Left ventricle myocardium inferior (tissue), 1 donor: ENCODE measurements at regions of chr2 and their contacts with region 1.

Region 1: DNA sequence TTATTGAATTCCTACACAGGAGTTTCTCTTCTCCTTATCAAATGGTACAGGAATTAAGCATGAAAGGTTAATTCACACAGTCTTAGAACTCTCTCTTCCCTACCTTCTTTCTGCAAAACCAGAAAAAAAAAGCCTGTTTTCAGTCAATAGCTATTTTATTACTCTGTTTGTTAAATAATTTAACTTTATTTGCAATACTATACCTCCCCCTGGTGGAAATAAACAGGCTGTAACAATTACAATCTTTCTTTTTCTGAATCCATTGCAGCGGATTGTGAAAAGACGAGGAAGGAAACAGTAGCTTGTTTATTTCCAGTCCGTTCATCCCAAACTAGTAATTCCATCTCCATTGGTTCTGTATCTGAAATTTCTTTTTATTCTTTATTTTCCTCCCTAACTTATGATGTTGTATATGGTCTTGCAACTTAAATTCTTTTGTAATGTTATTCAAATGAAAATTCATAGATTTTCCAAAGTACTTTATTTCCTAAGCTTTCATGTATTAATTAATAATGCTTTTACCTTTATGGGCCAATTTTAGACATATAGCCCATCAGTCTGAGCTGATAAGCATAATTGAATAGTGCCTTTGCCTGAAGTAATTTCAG is 165.2 kb downstream of the SH3BP4 start:
- DNase-seq: no peak
- H3K4me3 ChIP-seq: no peak overlapping the region
- H3K27ac ChIP-seq: no peak overlapping the region
- H3K4me1 ChIP-seq: no peaks in the 10 kb centered on the region
- H3K27me3 ChIP-seq: peaks cover 19% of the 10 kb centered on the region
- CTCF ChIP-seq: peak; percentile 80

Region 2: DNA sequence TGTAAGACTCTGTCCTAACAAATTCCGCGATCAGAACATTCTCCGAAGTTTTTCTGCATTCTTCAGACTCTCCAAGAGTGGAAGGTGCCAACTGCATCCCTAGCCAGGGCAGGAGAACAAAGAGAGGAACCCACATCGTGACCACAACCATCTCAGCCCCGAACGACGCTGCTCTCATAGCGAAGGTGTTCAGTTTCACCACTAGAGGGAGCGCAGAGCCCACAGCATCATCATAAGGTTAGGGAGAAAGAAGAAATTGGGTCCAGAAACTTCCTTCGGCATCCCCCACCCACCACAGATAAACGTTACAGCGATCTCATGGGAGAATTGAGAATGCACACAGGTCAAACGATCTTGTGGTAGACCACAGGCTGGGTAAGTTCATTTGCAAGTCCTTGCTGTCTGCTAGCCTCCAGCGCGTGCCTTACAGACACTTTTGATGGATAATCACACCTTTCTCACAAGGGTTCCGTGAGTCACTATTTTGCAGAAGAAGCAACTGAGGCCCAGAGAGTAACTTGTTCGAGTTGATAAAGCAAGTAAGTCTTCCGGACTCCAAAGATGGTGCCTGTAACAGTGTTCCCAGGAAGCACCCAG is 566.4 kb before region 1 on chr2:
- intact Hi-C with region 1: loop called (anchors 5 kb)
- DNase-seq: peak; percentile 23
- H3K4me3 ChIP-seq: no peak overlapping the region
- H3K27ac ChIP-seq: no peak overlapping the region
- H3K4me1 ChIP-seq: peaks cover 3% of the 10 kb centered on the region
- H3K27me3 ChIP-seq: peaks cover 46% of the 10 kb centered on the region
- CTCF ChIP-seq: peak; percentile 96

Region 3: DNA sequence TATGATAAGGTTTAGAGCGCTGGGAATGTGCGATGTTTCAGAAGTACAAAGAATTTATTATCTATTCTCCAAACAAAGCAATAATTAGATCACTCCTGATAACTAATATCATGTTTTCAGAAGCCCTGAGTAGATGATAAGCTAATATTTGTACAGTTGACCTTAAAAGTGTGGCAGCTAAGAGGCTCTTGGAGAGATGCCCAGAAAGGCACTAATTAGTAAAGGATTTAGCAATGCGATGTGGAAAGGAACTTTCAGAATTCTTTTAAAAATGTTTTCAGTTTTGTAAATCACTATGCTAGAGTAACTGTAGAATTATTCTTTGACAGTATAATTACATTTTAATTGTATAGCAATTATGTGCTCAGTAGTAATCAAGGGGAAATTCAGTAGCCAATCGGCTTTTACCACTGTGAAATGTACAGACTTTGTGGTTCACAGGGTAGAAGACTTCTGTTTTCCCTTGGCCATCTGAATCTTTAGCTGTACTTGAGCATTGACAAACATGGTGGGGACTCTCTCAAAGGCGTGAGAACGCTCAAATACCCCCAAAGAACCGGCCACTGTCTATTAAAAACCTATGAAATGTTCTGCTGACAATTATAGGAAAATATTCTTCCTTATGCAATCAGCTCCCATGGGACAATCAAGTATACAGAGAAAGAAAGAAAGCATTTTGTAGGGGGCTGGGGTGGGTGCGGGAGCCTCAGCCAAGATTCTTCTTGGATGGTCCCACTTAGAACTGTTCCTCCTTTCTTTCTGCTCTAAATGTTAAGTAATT is 114.0 kb after region 1 on chr2:
- intact Hi-C with region 1: no loop called
- DNase-seq: no peak
- H3K4me3 ChIP-seq: no peak overlapping the region
- H3K27ac ChIP-seq: peak overlapping the region; percentile 60
- H3K4me1 ChIP-seq: peaks cover 7% of the 10 kb centered on the region
- H3K27me3 ChIP-seq: peaks cover 57% of the 10 kb centered on the region
- CTCF ChIP-seq: no peak